Activated CD8-positive, alpha-beta T cell treated with anti-CD3 and anti-CD28 coated beads for 36 hours (primary cell): ENCODE measurements at regions of chr6 and their contacts with region 1.

Region 1: GRCh38 chr6:25070547-25071366 is 135.0 kb upstream of the RIPOR2 start:
- DNase-seq: peak; percentile 92
- ATAC-seq: peak; percentile 99
- H3K4me3 Mint-ChIP-seq: peak overlapping the region; percentile 68
- H3K27ac Mint-ChIP-seq: peak overlapping the region; percentile 94
- H3K4me1 Mint-ChIP-seq: peaks cover 6% of the 10 kb centered on the region
- H3K27me3 Mint-ChIP-seq: no peaks in the 10 kb centered on the region
- CTCF ChIP-seq: peak; percentile 87

Region 2: DNA sequence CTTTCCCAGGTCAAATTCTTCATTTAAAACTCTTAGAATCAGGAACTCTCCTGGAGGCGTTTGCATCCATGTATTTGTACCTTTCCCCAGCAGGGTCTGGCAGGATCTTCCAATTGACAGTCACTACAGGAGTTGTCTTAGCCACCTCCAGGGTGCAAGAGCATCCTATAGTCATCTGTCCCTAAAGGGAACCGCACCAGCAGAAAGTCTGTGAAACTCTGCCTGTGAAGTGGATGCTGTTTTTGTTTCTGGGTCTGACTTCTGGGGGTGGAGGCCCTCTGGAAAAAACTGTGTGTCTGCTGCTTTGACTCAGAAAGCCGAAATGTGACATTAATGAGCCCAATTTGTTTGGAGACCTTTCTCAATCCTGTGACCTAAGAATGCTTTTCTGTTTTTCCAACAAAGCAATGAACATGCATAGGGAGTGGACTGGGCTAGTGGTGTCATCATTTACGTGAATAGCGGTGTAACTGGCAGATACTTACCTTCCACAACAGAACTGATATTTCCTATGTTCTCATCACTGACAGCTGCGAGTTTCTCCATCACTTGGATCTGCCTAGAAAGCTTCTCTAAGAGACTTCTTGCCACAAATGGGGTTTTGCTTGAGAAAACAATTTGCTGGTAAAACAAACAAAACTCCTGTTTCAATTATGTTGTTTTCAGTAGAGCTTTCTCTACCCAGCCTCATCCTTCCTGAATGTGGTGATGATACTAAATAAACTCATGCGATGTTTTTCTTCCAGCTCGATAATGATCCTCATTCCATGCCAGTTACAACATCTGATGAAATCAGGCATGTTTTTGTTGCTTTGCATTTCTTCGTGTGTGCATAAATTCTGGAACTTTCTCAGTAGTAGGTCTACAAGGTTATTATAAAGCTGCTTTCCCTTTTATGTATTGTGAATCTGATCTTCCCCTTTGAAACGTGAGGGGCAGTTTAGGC is 238.7 kb before region 1 on chr6:
- CTCF ChIA-PET with region 1: no interaction called
- POLR2A ChIA-PET with region 1: no interaction called
- intact Hi-C with region 1: no loop called
- DNase-seq: no peak
- ATAC-seq: no peak
- H3K4me3 Mint-ChIP-seq: no peak overlapping the region
- H3K27ac Mint-ChIP-seq: peak overlapping the region; percentile 71
- H3K4me1 Mint-ChIP-seq: peaks cover 57% of the 10 kb centered on the region
- H3K27me3 Mint-ChIP-seq: no peaks in the 10 kb centered on the region
- CTCF ChIP-seq: no peak

Region 3: DNA sequence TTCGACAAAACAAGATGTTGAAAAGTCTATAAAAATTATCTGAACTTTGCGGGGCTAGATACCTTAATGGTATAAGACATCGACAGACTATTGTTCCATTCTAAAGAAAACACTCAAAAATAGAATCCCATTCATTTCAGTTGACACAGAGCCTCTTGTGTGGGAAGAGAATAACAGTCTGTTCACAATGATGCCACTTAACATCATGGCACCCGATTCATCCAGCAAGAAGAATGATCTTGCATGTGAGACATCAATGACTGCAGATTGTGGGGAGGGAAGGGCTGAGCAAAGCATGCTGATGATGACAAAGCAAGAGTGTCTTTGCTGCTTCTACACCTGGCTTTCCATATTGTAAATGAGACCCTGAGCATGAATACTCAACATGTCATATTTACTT is 222.3 kb before region 1 on chr6:
- CTCF ChIA-PET with region 1: interaction called, 10 read pairs
- POLR2A ChIA-PET with region 1: no interaction called
- intact Hi-C with region 1: no loop called
- DNase-seq: no peak
- ATAC-seq: no peak
- H3K4me3 Mint-ChIP-seq: no peak overlapping the region
- H3K27ac Mint-ChIP-seq: peak overlapping the region; percentile 31
- H3K4me1 Mint-ChIP-seq: peaks cover 48% of the 10 kb centered on the region
- H3K27me3 Mint-ChIP-seq: no peaks in the 10 kb centered on the region
- CTCF ChIP-seq: no peak

Region 4: GRCh38 chr6:25027221-25027916 is 43.4 kb before region 1 on chr6:
- CTCF ChIA-PET with region 1: interaction called, 107 read pairs
- POLR2A ChIA-PET with region 1: interaction called, 6 read pairs
- intact Hi-C with region 1: loop called (anchors 2 kb)
- DNase-seq: peak; percentile 90
- ATAC-seq: peak; percentile 96
- H3K4me3 Mint-ChIP-seq: peak overlapping the region; percentile 65
- H3K27ac Mint-ChIP-seq: peak overlapping the region; percentile 81
- H3K4me1 Mint-ChIP-seq: peaks cover 45% of the 10 kb centered on the region
- H3K27me3 Mint-ChIP-seq: no peaks in the 10 kb centered on the region
- CTCF ChIP-seq: peak; percentile 42

Region 5: DNA sequence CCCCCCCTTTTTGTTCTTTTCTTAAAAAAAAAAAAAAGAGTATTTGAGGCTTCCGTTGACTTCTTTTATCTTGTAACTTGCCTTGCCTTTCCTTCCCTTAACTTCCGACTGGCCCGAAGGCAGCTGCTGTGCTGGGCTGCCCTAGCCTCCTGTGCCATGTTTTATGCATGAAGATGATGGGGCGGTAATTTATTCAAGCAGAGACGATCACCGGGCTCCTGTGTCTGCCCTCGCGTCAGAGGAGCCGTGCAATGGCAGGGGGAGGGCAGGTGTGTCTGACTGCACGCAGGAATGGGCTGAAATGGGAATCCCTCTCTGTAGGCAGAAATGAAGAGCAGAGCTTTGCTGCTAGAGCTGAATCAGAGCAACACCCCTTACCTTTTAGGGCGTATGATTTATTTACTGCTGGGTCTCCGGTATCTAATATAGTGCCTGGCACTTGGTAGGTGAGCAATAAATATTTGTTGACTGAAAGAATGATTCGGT is 28.7 kb before region 1 on chr6:
- CTCF ChIA-PET with region 1: interaction called, 20 read pairs
- POLR2A ChIA-PET with region 1: no interaction called
- intact Hi-C with region 1: no loop called
- DNase-seq: peak; percentile 64
- ATAC-seq: peak; percentile 64
- H3K4me3 Mint-ChIP-seq: peak overlapping the region; percentile 83
- H3K27ac Mint-ChIP-seq: peak overlapping the region; percentile 92
- H3K4me1 Mint-ChIP-seq: peaks cover 52% of the 10 kb centered on the region
- H3K27me3 Mint-ChIP-seq: no peaks in the 10 kb centered on the region
- CTCF ChIP-seq: no peak

Region 6: DNA sequence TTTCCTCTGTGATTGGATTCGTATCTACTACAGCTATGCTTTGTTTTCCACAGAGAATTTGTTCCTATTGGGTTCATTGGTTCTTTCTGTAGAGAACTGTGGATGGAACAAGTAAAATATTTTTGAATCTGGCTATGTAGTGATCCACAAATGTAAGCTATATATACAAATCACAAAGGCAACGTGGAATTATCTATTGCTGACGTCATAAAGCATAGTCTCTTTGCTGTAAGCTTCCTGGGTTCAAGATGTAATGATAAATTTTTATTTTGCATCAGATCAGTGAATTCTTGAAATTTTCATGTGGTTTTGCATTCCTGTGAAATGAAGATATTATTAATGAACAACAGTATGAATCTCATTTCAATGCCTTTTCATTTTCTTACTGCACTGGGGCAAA is 10.8 kb after region 1 on chr6:
- CTCF ChIA-PET with region 1: interaction called, 22 read pairs
- POLR2A ChIA-PET with region 1: no interaction called
- intact Hi-C with region 1: no loop called
- DNase-seq: no peak
- ATAC-seq: no peak
- H3K4me3 Mint-ChIP-seq: no peak overlapping the region
- H3K27ac Mint-ChIP-seq: no peak overlapping the region
- H3K4me1 Mint-ChIP-seq: peaks cover 14% of the 10 kb centered on the region
- H3K27me3 Mint-ChIP-seq: no peaks in the 10 kb centered on the region
- CTCF ChIP-seq: no peak